Right ventricle myocardium inferior (tissue), 1 donor: ENCODE measurements at regions of chr9 and their contacts with region 1.

Region 1: DNA sequence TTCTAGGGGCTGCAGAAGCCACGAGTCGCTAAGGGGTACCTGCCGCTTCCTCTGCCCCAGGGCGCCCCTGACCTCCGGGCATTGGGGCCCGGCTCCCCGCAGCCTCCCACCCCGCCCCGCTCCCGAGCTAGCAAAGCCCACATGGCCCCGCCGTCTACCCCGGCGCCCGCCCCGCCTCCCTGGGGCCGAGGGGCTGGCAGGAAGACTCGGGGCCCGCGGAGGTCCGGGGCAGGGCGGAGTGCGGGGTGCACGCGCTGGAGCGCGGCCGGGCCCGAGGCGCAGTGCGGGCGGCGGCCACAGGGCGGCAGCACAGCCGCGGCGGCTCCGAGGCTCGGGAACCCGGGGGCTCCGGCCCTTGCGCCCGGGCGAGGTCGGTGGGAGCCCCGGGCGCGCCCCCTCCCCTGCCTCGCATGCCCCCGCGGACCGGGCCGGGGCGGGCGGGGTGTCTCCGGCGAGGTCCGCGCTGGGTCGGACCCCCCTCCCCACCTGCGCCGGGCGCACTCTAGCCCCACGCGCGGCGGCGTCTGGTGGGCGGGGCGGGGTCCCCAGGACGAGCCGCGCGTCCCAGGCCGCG is 6.7 kb downstream of the NRARP start:
- DNase-seq: no peak
- ATAC-seq: peak; percentile 53

Region 2: GRCh38 chr9:137406876-137407589 is 111.7 kb after region 1 on chr9:
- intact Hi-C with region 1: loop called (anchors 2 kb)
- DNase-seq: peak; percentile 80
- ATAC-seq: peak; percentile 82

Region 3: GRCh38 chr9:137445275-137445807 is 150.0 kb after region 1 on chr9:
- intact Hi-C with region 1: loop called (anchors 2 kb)
- DNase-seq: peak; percentile 86
- ATAC-seq: peak; percentile 69

Region 4: DNA sequence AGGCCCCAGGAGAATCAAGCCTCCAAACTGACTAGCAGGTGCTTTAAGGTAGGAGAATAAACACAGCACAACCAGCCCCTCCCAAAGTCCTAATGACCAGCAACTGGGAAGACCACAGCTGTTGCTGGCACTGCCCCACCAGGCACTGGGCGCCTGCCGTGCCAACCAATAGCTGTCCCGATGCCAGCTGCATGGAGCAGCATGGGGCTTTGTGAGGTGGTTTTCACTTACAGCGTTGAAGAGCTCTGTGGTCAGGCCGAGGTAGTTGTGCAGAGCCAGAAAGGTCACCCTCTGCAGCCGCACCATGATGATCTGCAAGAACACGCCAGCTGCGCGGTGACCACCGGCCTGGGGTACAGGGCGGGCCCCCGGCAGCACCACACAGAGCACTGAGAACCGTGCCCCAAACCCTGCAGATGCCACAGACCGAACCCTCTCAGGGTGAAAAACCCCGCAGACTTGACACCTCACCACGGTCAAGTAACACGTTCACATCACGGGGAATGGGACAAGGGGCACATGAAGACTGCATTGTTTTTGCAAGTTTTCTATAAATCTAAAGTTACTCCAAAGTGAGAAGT is 226.2 kb after region 1 on chr9:
- intact Hi-C with region 1: loop called (anchors 10 kb)
- DNase-seq: peak; percentile 72
- ATAC-seq: no peak